ENCODE measurements at regions of chr10 and their contacts with region 1.

Region 1: GRCh38 chr10:27558612-27559020 is 54.5 kb downstream of the RAB18 start:
- DNase-seq: peak in 5 of 10 donors; percentile 20 to 84 (median 25)

Region 2: GRCh38 chr10:27504007-27504807 is 54.4 kb before region 1 on chr10 and contains the start of gene RAB18:
- intact Hi-C with region 1: no loop called
- DNase-seq: peak; percentile 94 to 99 (median 96)

Region 3: GRCh38 chr10:27620430-27621397 is 62.1 kb after region 1 on chr10:
- intact Hi-C with region 1: no loop called
- DNase-seq: peak in 2 of 10 donors; percentile 41 to 57

Region 4: GRCh38 chr10:27658788-27659187 is 100.2 kb after region 1 on chr10:
- intact Hi-C with region 1: loop called (anchors 5 kb)
- DNase-seq: no peak

Region 5: GRCh38 chr10:28179006-28179742 is 620.6 kb after region 1 on chr10:
- intact Hi-C with region 1: loop called (anchors 10 kb)
- DNase-seq: no peak

Region 6: DNA sequence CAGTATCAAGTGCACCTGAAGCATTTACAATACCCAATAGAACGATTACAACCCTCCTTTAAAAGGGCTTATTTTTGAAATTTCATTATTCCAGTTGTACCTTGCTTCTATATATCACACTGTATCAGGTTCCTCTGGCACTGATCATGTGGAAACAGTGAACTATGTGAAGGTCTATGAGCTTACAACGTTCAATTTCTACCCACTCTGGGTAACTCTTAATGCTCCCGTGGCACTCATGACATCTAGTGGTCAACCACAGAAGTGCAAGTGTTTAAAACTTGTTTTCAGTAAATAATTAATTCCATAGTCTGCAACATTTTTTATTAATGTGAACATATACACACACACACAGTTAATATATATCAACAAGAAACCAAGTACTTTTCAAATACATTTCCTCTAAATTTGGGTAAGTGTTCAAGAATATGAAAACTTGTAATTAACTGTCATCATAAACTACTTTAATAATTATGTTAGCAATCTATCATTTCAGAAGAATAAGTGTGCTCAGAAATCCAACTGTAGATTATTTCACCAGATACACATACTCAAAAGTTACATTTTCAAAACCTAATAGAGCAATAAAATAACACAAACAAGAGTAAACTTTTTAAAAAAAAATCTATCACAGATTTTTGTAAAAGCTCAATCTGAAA is 683.3 kb after region 1 on chr10:
- intact Hi-C with region 1: loop called (anchors 10 kb)
- DNase-seq: no peak

Measured in posterior cingulate gyrus (tissue), 11 donors.